ENCODE measurements at regions of chr12 and their contacts with region 1.

Region 1: GRCh38 chr12:120012067-120012621 is 23.1 kb downstream of the BICDL1 start:
- DNase-seq: peak; percentile 82 to 99 (median 88)
- H3K4me3 ChIP-seq: peak overlapping the region; percentile 1 to 22
- H3K4me3 Mint-ChIP-seq: peak overlapping the region; percentile 63 to 89 (median 80)
- H3K27ac ChIP-seq: peak overlapping the region; percentile 95
- H3K27ac Mint-ChIP-seq: peak overlapping the region; percentile 95 to 100 (median 99)
- H3K4me1 ChIP-seq: peaks cover 81% of the 10 kb centered on the region
- H3K4me1 Mint-ChIP-seq: peaks cover 58 to 88% (median 67%) of the 10 kb centered on the region in 4 donors
- H3K27me3 ChIP-seq: no peaks in the 10 kb centered on the region
- H3K27me3 Mint-ChIP-seq: no peaks in the 10 kb centered on the region

Region 2: GRCh38 chr12:119819322-119819721 is 192.8 kb before region 1 on chr12:
- CTCF ChIA-PET with region 1: no interaction called
- POLR2A ChIA-PET with region 1: no interaction called
- intact Hi-C with region 1: no loop called
- DNase-seq: no peak
- H3K4me3 ChIP-seq: no peak overlapping the region
- H3K4me3 Mint-ChIP-seq: no peak overlapping the region
- H3K27ac ChIP-seq: no peak overlapping the region
- H3K27ac Mint-ChIP-seq: no peak overlapping the region
- H3K4me1 ChIP-seq: no peaks in the 10 kb centered on the region
- H3K4me1 Mint-ChIP-seq: no peaks in the 10 kb centered on the region
- H3K27me3 ChIP-seq: no peaks in the 10 kb centered on the region
- H3K27me3 Mint-ChIP-seq: no peaks in the 10 kb centered on the region

Region 3: GRCh38 chr12:119994892-119995651 is 17.1 kb before region 1 on chr12:
- CTCF ChIA-PET with region 1: interaction called, 11 read pairs
- POLR2A ChIA-PET with region 1: interaction called, 236 read pairs
- intact Hi-C with region 1: no loop called
- DNase-seq: no peak
- H3K4me3 ChIP-seq: no peak overlapping the region
- H3K4me3 Mint-ChIP-seq: no peak overlapping the region
- H3K27ac ChIP-seq: no peak overlapping the region
- H3K27ac Mint-ChIP-seq: peak overlapping the region in 3 of 7 donors; percentile 57 to 88 (median 57)
- H3K4me1 ChIP-seq: peaks cover 26% of the 10 kb centered on the region
- H3K4me1 Mint-ChIP-seq: peaks cover 32 to 47% (median 38%) of the 10 kb centered on the region in 4 donors
- H3K27me3 ChIP-seq: no peaks in the 10 kb centered on the region
- H3K27me3 Mint-ChIP-seq: no peaks in the 10 kb centered on the region

Region 4: DNA sequence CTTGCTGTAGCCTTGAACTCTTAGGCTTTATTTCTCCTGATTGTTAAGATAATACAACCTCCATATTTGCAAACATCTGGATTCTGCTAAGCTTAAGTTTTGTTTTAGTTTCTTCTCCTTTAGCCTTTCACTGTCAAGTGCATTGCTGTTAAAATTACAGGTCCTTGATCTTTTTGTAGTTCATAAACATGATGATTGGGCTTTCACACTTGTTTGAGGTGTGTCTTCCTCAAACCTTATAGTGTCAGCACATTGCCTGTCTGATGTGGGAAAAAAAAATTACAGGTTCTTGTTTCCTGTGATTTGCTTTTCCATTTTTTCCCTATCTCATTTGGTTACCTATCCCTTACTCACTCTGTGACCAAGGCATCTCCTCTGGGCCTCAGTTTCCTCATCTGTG is 36.1 kb after region 1 on chr12:
- CTCF ChIA-PET with region 1: no interaction called
- POLR2A ChIA-PET with region 1: interaction called, 10 read pairs
- intact Hi-C with region 1: loop called (anchors 2 kb)
- DNase-seq: peak in 4 of 5 donors; percentile 9 to 33 (median 14)
- H3K4me3 ChIP-seq: no peak overlapping the region
- H3K4me3 Mint-ChIP-seq: peak overlapping the region in 6 of 8 donors; percentile 5 to 64 (median 53)
- H3K27ac ChIP-seq: peak overlapping the region; percentile 37
- H3K27ac Mint-ChIP-seq: peak overlapping the region; percentile 77 to 94 (median 90)
- H3K4me1 ChIP-seq: peaks cover 35% of the 10 kb centered on the region
- H3K4me1 Mint-ChIP-seq: peaks cover 28 to 40% (median 35%) of the 10 kb centered on the region in 4 donors
- H3K27me3 ChIP-seq: no peaks in the 10 kb centered on the region
- H3K27me3 Mint-ChIP-seq: no peaks in the 10 kb centered on the region

Region 5: GRCh38 chr12:120116792-120117651 is 104.9 kb after region 1 on chr12:
- CTCF ChIA-PET with region 1: interaction called, 3 read pairs
- POLR2A ChIA-PET with region 1: interaction called, 10 read pairs
- intact Hi-C with region 1: no loop called
- DNase-seq: peak; percentile 95 to 99 (median 97)
- H3K4me3 ChIP-seq: peak overlapping the region; percentile 75 to 80
- H3K4me3 Mint-ChIP-seq: peak overlapping the region; percentile 86 to 98 (median 90)
- H3K27ac ChIP-seq: peak overlapping the region; percentile 83
- H3K27ac Mint-ChIP-seq: peak overlapping the region; percentile 85 to 99 (median 94)
- H3K4me1 ChIP-seq: peaks cover 84% of the 10 kb centered on the region
- H3K4me1 Mint-ChIP-seq: peaks cover 59 to 88% (median 76%) of the 10 kb centered on the region in 4 donors
- H3K27me3 ChIP-seq: no peaks in the 10 kb centered on the region
- H3K27me3 Mint-ChIP-seq: no peaks in the 10 kb centered on the region

Region 6: GRCh38 chr12:120200364-120200800 is 188.2 kb after region 1 on chr12:
- CTCF ChIA-PET with region 1: no interaction called
- POLR2A ChIA-PET with region 1: interaction called, 11 read pairs
- intact Hi-C with region 1: no loop called
- DNase-seq: peak in 1 of 5 donors; percentile 19
- H3K4me3 ChIP-seq: peak overlapping the region; percentile 80 to 91
- H3K4me3 Mint-ChIP-seq: peak overlapping the region; percentile 93 to 99 (median 98)
- H3K27ac ChIP-seq: peak overlapping the region; percentile 84
- H3K27ac Mint-ChIP-seq: peak overlapping the region; percentile 93 to 99 (median 98)
- H3K4me1 ChIP-seq: peaks cover 42% of the 10 kb centered on the region
- H3K4me1 Mint-ChIP-seq: peaks cover 23 to 60% (median 36%) of the 10 kb centered on the region in 4 donors
- H3K27me3 ChIP-seq: no peaks in the 10 kb centered on the region
- H3K27me3 Mint-ChIP-seq: no peaks in the 10 kb centered on the region